ENCODE measurements at regions of chr21 and their contacts with region 1.

Region 1: GRCh38 chr21:14533504-14534428 is 12.3 kb downstream of the SAMSN1 start:
- DNase-seq: no peak
- H3K4me3 Mint-ChIP-seq: peak overlapping the region; percentile 86
- H3K27ac Mint-ChIP-seq: peak overlapping the region; percentile 99
- H3K4me1 Mint-ChIP-seq: peaks cover 72% of the 10 kb centered on the region
- H3K27me3 Mint-ChIP-seq: no peaks in the 10 kb centered on the region

Region 2: DNA sequence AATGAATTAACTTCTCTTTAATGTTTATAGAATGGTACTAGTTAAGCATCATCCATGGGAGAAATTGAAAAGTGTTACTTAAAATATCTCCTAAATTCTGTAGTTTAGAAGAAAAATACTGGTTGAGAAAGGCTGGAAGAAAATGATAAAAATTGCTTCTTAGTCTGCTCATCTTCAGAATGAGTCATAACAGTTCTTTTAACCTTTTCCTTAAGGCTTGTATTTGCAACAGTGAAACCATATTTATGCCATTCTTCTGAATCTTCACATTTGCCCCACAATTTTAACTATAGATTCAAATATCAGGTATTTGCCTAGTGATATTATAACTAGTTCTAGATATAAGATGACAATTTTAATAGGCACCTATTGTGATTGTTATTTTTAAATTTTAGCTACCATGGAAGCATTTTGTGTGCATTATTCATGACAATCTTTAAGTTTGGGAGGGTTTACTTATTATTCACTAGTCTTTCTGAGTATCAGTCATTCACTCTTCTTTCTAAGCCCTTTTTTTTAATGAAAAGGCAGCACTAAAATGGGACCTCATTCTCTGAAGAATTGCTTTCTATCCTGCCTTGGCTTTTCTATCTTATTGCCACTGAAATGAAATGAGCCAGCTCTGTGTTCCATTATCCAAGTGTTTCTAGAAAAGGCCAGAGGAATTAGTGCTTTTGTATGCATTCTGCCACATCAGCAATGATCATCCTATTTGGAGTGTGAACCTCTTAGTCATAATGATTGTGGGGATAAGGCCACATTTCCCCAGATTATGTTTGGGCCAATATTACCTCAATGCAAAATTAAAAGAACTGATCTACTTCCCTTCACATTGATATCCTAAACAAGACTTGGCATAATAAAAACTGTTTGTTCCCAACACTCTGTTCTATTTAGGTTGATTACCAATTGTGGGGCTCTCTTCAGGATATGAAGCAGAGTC is 46.0 kb before region 1 on chr21:
- intact Hi-C with region 1: loop called (anchors 2 kb)
- DNase-seq: no peak
- H3K4me3 Mint-ChIP-seq: peak overlapping the region; percentile 2
- H3K27ac Mint-ChIP-seq: peak overlapping the region; percentile 88
- H3K4me1 Mint-ChIP-seq: peaks cover 69% of the 10 kb centered on the region
- H3K27me3 Mint-ChIP-seq: no peaks in the 10 kb centered on the region

Region 3: GRCh38 chr21:14572204-14572780 is 38.5 kb after region 1 on chr21:
- intact Hi-C with region 1: loop called (anchors 1 kb)
- DNase-seq: no peak
- H3K4me3 Mint-ChIP-seq: no peak overlapping the region
- H3K27ac Mint-ChIP-seq: peak overlapping the region; percentile 90
- H3K4me1 Mint-ChIP-seq: peaks cover 53% of the 10 kb centered on the region
- H3K27me3 Mint-ChIP-seq: no peaks in the 10 kb centered on the region

Region 4: DNA sequence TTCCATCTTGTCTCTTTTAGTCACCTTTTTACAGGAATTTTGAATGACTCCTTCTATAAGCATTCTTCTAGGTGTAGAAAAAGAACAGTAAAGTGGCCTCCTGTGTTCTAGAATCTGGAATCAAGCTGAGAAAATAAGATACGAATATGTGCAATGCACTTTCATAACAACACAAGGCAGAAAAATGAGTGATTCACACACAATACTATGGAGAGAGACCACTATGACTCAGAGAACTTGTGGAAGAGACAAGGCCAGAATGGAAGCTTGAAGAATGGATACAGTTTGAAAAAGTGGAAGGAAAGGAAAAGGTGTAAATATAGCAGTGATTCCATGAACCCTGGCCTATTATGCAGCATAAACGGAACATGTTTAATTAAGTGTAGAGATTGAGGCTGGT is 69.4 kb after region 1 on chr21:
- intact Hi-C with region 1: no loop called
- DNase-seq: no peak
- H3K4me3 Mint-ChIP-seq: peak overlapping the region; percentile 34
- H3K27ac Mint-ChIP-seq: no peak overlapping the region
- H3K4me1 Mint-ChIP-seq: peaks cover 38% of the 10 kb centered on the region
- H3K27me3 Mint-ChIP-seq: no peaks in the 10 kb centered on the region

Region 5: DNA sequence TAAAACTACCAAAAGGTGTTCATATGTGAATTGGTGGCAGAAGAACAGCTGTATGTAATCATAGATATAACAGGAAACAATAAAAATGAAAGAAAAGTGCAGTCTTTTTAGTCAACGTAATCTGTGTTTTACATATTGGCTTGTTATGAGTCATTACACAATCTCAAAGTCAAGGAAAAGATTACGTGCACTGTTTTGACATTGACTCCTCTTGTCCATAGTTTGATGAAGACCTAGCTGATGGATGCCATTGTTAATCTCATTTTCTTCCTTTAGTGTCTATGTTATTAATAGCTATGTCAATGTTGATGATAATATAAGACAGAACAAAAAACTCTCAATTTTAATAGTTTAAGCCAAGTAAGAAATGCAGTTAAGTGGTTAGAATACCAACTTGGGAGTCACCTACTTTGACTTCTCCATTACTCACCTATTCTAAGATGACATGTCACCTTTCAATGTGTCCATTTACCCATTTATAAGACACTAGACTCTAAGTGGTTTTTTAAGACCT is 96.8 kb after region 1 on chr21:
- intact Hi-C with region 1: loop called (anchors 2 kb)
- DNase-seq: no peak
- H3K4me3 Mint-ChIP-seq: no peak overlapping the region
- H3K27ac Mint-ChIP-seq: peak overlapping the region; percentile 62
- H3K4me1 Mint-ChIP-seq: peaks cover 24% of the 10 kb centered on the region
- H3K27me3 Mint-ChIP-seq: no peaks in the 10 kb centered on the region